Adrenal gland (tissue), 19 donors: ENCODE measurements at regions of chr14 and their contacts with region 1.

Region 1: GRCh38 chr14:102314242-102315011 is 5.1 kb upstream of the ZNF839 start:
- DNase-seq: peak; percentile 81 to 93 (median 89)
- H3K4me3 ChIP-seq: peak overlapping the region in 3 of 4 donors; percentile 8 to 52 (median 25)
- H3K27ac ChIP-seq: peak overlapping the region in 3 of 5 donors; percentile 15 to 56 (median 34)
- H3K4me1 ChIP-seq: peaks cover 0 to 36% of the 10 kb centered on the region in 2 donors
- H3K27me3 ChIP-seq: no peaks in the 10 kb centered on the region
- CTCF ChIP-seq: peak; percentile 75 to 96 (median 92)
- POLR2A ChIP-seq: no peak

Region 2: GRCh38 chr14:102235275-102235897 is 79.0 kb before region 1 on chr14:
- intact Hi-C with region 1: loop called (anchors 2 to 5 kb)
- DNase-seq: peak; percentile 85 to 95 (median 90)
- H3K4me3 ChIP-seq: no peak overlapping the region
- H3K27ac ChIP-seq: peak overlapping the region in 1 of 5 donors; percentile 19
- H3K4me1 ChIP-seq: no peaks in the 10 kb centered on the region
- H3K27me3 ChIP-seq: no peaks in the 10 kb centered on the region
- CTCF ChIP-seq: peak; percentile 74 to 90 (median 86)
- POLR2A ChIP-seq: no peak

Region 3: DNA sequence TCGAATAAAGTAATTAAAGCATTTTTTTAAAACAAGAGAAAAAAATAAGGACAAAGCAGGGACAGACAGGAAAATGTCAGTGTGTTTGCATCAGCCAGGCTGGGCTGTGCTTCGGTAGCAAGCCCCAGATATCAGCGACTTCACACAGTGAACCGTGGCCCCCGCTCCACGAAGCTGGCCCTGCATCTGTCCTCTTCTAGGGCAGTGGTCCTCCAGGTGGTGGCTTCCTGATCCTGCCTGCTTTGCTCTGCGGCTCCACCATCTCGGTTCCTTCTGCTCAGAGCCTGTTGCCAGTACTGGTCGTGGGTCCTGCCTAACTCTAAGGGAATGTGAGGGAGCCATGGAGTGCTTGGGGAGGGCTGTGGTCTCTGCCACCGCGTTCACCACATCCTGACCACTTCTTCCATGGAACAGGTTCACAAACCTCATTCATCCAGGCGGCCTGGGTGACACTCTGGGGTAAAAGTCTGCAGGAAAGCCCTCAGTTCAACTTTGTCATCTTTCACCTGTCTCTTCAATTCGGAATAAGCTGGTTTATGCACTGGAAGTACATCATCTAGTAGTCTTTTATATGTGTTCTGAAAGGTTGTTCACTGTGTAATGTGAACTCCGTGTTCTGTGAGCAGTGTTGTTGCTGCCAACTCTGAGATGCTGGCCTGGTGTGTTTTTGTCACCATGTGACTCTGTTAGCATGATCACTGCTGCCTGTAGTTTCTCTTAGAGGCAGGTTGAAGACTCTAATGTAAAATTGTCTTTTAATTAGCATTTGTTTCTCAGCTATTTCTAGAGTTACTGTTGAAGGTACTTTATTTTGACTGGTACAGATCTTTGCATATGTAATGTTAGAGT is 147.3 kb after region 1 on chr14:
- intact Hi-C with region 1: no loop called
- DNase-seq: no peak
- H3K4me3 ChIP-seq: no peak overlapping the region
- H3K27ac ChIP-seq: no peak overlapping the region
- H3K4me1 ChIP-seq: no peaks in the 10 kb centered on the region
- H3K27me3 ChIP-seq: no peaks in the 10 kb centered on the region
- CTCF ChIP-seq: no peak
- POLR2A ChIP-seq: no peak